MCF 10A (cell line): ENCODE measurements at regions of chr18 and their contacts with region 1.

Region 1: GRCh38 chr18:63741769-63742168 is 33.4 kb upstream of the SERPINB7 start:
- DNase-seq: peak; percentile 65
- H3K4me3 Mint-ChIP-seq: no peak overlapping the region
- H3K27ac Mint-ChIP-seq: no peak overlapping the region
- H3K4me1 Mint-ChIP-seq: peaks cover 5% of the 10 kb centered on the region
- H3K27me3 Mint-ChIP-seq: no peaks in the 10 kb centered on the region
- CTCF ChIP-seq: peak; percentile 64

Region 2: DNA sequence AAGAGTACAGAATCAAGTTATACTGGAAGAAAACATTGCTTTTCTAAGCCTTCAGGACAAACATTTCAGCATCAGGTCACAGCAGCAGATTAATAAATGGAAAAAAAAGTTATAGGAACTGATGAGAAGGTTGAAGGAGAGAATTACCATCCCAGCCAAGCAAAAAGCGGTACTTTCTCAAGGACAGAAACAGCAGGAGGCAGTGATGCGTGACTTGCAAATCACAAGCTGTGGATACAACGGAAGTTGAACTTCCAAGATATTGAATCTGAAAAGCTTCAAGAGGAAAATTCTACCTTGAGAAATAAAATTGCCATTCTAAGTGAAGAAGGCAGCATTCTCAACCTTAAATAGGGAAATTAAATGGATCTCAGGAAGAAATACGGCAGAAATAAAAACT is 218.1 kb before region 1 on chr18:
- CTCF ChIA-PET with region 1: interaction called, 350 read pairs
- POLR2A ChIA-PET with region 1: interaction called, 6 read pairs
- intact Hi-C with region 1: loop called (anchors 1 kb)
- DNase-seq: no peak
- H3K4me3 Mint-ChIP-seq: no peak overlapping the region
- H3K27ac Mint-ChIP-seq: no peak overlapping the region
- H3K4me1 Mint-ChIP-seq: peaks cover 6% of the 10 kb centered on the region
- H3K27me3 Mint-ChIP-seq: no peaks in the 10 kb centered on the region
- CTCF ChIP-seq: no peak

Region 3: GRCh38 chr18:63588890-63589289 is 152.9 kb before region 1 on chr18:
- CTCF ChIA-PET with region 1: interaction called, 177 read pairs
- POLR2A ChIA-PET with region 1: interaction called, 7 read pairs
- intact Hi-C with region 1: no loop called
- DNase-seq: peak; percentile 50
- H3K4me3 Mint-ChIP-seq: no peak overlapping the region
- H3K27ac Mint-ChIP-seq: no peak overlapping the region
- H3K4me1 Mint-ChIP-seq: peaks cover 52% of the 10 kb centered on the region
- H3K27me3 Mint-ChIP-seq: no peaks in the 10 kb centered on the region
- CTCF ChIP-seq: no peak

Region 4: GRCh38 chr18:63683152-63683551 is 58.6 kb before region 1 on chr18:
- CTCF ChIA-PET with region 1: interaction called, 20 read pairs
- POLR2A ChIA-PET with region 1: no interaction called
- intact Hi-C with region 1: no loop called
- DNase-seq: peak; percentile 95
- H3K4me3 Mint-ChIP-seq: peak overlapping the region; percentile 65
- H3K27ac Mint-ChIP-seq: peak overlapping the region; percentile 100
- H3K4me1 Mint-ChIP-seq: peaks cover 39% of the 10 kb centered on the region
- H3K27me3 Mint-ChIP-seq: no peaks in the 10 kb centered on the region
- CTCF ChIP-seq: no peak

Region 5: DNA sequence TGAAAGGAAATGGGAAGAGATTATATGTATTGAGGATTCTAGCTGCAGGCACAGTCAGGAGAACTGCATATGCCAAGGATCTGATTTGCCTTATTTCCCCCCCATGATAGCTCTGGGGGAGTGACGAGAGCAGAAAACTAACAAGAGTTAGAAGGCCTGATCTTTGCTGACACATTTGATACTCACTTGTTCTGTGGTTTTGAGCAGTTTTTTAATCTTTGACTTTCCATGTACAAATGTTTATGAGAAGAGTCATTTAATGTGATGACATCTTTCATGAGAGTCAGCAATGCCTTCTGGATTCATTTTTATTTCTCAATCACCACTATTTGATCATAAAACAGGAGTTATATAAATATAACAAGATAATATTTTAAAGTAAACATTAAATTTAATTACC is 20.7 kb after region 1 on chr18:
- CTCF ChIA-PET with region 1: interaction called, 11 read pairs
- POLR2A ChIA-PET with region 1: interaction called, 4 read pairs
- intact Hi-C with region 1: no loop called
- DNase-seq: peak; percentile 64
- H3K4me3 Mint-ChIP-seq: no peak overlapping the region
- H3K27ac Mint-ChIP-seq: peak overlapping the region; percentile 10
- H3K4me1 Mint-ChIP-seq: peaks cover 15% of the 10 kb centered on the region
- H3K27me3 Mint-ChIP-seq: no peaks in the 10 kb centered on the region
- CTCF ChIP-seq: no peak

Region 6: GRCh38 chr18:63848159-63848558 is 106.4 kb after region 1 on chr18:
- CTCF ChIA-PET with region 1: interaction called, 104 read pairs
- POLR2A ChIA-PET with region 1: interaction called, 3 read pairs
- intact Hi-C with region 1: loop called (anchors 1 kb)
- DNase-seq: peak; percentile 73
- H3K4me3 Mint-ChIP-seq: no peak overlapping the region
- H3K27ac Mint-ChIP-seq: no peak overlapping the region
- H3K4me1 Mint-ChIP-seq: no peaks in the 10 kb centered on the region
- H3K27me3 Mint-ChIP-seq: no peaks in the 10 kb centered on the region
- CTCF ChIP-seq: peak; percentile 64

Region 7: GRCh38 chr18:64436111-64436510 is 694.3 kb after region 1 on chr18:
- CTCF ChIA-PET with region 1: no interaction called
- POLR2A ChIA-PET with region 1: no interaction called
- intact Hi-C with region 1: no loop called
- DNase-seq: no peak
- H3K4me3 Mint-ChIP-seq: no peak overlapping the region
- H3K27ac Mint-ChIP-seq: no peak overlapping the region
- H3K4me1 Mint-ChIP-seq: no peaks in the 10 kb centered on the region
- H3K27me3 Mint-ChIP-seq: no peaks in the 10 kb centered on the region
- CTCF ChIP-seq: no peak